Calu3 (cell line): ENCODE measurements at regions of chr14 and their contacts with region 1.

Region 1: DNA sequence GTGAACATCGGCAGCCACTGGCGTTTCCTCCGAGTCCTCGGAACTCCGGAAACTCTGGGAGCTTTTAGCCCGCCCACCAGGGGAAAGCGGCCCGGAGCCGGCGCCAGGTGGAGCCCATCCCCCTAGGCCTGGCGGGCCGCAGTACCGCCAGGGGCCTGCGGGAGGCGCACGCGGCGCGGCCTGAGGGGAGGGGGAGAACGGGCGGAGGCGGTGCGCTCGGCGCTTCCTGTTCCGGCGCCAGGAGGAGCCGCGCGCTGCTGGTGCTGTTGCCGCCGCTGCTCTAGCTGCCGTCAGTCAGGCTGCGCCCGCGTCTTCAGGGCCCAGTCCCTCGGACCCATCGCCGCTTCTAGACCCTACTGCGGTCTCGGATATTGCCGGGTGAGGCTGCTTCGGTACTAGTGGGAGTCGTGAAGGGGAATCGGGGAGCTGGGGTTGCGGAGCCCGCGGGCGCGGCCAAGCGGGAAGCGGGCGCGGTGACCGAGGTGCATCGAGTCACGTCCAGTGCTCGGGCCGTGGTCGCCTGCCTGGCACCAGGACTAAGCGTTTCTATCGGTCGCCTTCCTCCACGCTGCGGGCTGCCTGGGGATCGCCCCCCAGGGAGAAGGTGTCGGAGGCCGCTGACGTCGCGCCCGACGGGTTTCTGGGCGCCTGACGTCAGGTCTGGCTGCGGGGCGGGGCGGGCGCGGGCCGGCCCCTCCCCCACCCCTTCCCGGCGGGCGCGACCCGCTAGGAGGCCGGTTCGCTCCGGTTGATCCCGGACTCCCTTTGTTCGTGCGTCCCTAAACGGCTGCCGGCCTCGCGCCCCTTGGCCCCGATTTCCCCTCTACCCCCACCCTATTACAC is at the start of gene MAPK1IP1L:
- DNase-seq: peak; percentile 94
- H3K4me3 Mint-ChIP-seq: peak within 1 kb of the TSS; percentile 92
- H3K27ac Mint-ChIP-seq: peak within 1 kb of the TSS; percentile 99
- H3K4me1 Mint-ChIP-seq: peaks cover 10% of the 10 kb centered on the region
- H3K27me3 Mint-ChIP-seq: no peaks in the 10 kb centered on the region
- CTCF ChIP-seq: peak; percentile 97
- total RNA-seq, gene MAPK1IP1L: 104 and 108 TPM in 2 replicates

Region 2: GRCh38 chr14:53793790-53794505 is 1257.7 kb before region 1 on chr14:
- CTCF ChIA-PET with region 1: no interaction called
- intact Hi-C with region 1: no loop called
- DNase-seq: no peak
- H3K4me3 Mint-ChIP-seq: no peak overlapping the region
- H3K27ac Mint-ChIP-seq: no peak overlapping the region
- H3K4me1 Mint-ChIP-seq: no peaks in the 10 kb centered on the region
- H3K27me3 Mint-ChIP-seq: no peaks in the 10 kb centered on the region
- CTCF ChIP-seq: no peak

Region 3: DNA sequence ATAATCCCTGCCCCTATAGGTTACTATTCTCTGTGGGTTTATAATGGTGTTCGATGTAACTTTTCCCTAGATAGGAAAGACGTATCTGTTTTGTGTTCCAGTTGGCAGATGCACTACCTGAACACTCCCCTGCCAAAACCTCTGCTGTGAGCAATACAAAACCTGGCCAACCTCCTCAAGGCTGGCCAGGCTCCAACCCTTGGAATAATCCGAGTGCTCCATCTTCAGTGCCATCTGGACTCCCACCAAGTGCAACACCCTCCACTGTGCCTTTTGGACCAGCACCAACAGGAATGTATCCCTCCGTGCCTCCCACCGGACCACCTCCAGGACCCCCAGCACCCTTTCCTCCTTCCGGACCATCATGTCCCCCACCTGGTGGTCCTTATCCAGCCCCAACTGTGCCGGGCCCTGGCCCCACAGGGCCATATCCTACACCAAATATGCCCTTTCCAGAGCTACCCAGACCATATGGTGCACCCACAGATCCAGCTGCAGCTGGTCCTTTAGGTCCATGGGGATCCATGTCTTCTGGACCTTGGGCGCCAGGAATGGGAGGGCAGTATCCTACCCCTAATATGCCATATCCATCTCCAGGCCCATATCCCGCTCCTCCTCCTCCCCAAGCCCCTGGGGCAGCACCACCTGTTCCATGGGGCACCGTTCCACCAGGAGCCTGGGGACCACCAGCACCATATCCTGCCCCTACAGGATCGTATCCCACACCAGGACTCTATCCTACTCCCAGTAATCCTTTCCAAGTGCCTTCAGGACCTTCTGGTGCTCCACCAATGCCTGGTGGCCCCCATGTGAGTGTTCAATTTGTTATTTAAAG is 11.1 kb after region 1 on chr14:
- CTCF ChIA-PET with region 1: no interaction called
- intact Hi-C with region 1: no loop called
- DNase-seq: no peak
- H3K4me3 Mint-ChIP-seq: no peak overlapping the region
- H3K27ac Mint-ChIP-seq: no peak overlapping the region
- H3K4me1 Mint-ChIP-seq: no peaks in the 10 kb centered on the region
- H3K27me3 Mint-ChIP-seq: no peaks in the 10 kb centered on the region
- CTCF ChIP-seq: no peak

Region 4: DNA sequence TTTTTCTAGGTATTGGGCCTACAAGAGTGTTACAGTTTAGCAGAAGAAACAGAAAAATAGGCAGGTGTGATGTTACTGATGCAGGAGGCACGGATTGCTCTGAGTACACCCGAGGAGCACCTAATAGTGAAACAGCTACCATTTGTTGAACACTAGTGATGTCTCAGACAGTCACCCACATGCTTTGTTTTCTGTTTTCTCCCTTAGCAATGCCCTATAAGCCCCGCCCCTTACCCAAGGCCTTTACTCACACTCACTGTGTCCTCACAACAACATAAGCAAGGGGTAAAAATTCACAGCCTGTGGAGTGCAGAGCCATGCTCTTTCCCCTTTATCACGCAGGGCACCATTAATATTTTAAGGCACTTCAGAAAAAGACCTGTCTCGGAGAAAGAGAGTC is 25.5 kb after region 1 on chr14:
- CTCF ChIA-PET with region 1: interaction called, 17 read pairs
- intact Hi-C with region 1: no loop called
- DNase-seq: peak; percentile 73
- H3K4me3 Mint-ChIP-seq: peak overlapping the region; percentile 53
- H3K27ac Mint-ChIP-seq: peak overlapping the region; percentile 96
- H3K4me1 Mint-ChIP-seq: peaks cover 30% of the 10 kb centered on the region
- H3K27me3 Mint-ChIP-seq: no peaks in the 10 kb centered on the region
- CTCF ChIP-seq: no peak

Region 5: DNA sequence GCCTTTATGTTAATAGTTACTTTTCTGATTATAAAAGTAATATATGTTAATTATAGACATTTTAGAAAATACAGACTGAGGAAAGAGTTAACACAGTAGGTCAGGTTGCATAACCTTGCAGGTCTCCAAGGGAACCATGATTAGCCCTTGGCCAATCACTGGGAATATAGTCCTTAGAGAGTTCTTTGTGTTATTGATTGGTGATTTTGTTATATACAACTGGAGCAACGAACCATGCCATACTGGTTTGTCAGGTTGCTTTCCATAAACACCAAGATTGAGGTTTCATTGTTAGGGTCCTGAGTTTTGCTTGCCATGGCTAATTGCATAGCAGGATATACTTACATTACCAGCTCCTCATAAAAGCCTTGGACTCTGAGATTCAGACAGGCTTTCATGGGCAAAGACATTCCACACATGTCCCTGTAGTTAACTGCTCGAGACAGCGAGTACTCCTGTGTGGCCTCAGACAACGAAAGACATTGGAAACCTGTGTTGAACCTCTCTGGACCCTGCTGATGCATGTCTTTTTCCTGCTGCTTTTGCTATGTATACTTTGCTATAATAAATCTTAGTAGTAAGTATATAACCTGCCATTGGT is 33.5 kb after region 1 on chr14:
- CTCF ChIA-PET with region 1: interaction called, 3 read pairs
- intact Hi-C with region 1: loop called (anchors 5 kb)
- DNase-seq: peak; percentile 54
- H3K4me3 Mint-ChIP-seq: no peak overlapping the region
- H3K27ac Mint-ChIP-seq: peak overlapping the region; percentile 42
- H3K4me1 Mint-ChIP-seq: peaks cover 12% of the 10 kb centered on the region
- H3K27me3 Mint-ChIP-seq: no peaks in the 10 kb centered on the region
- CTCF ChIP-seq: no peak